ENCODE measurements at regions of chr7 and their contacts with region 1.

Region 1: GRCh38 chr7:36670585-36671431 is 53.5 kb downstream of the AOAH start:
- DNase-seq: peak; percentile 62
- ATAC-seq: peak; percentile 98
- H3K4me3 ChIP-seq: no peak overlapping the region
- H3K27ac ChIP-seq: no peak overlapping the region
- H3K4me1 ChIP-seq: no peaks in the 10 kb centered on the region
- H3K27me3 ChIP-seq: peaks cover 10% of the 10 kb centered on the region
- CTCF ChIP-seq: peak; percentile 92
- POLR2A ChIP-seq: 0 out of 2 replicates have a peak, but pooled peaks have one; percentile 33
- RAD21 ChIP-seq: peak; percentile 93

Region 2: GRCh38 chr7:36440880-36441279 is 229.9 kb before region 1 on chr7:
- CTCF ChIA-PET with region 1: interaction called, 10 read pairs
- POLR2A ChIA-PET with region 1: no interaction called
- dilution Hi-C with region 1: no loop called
- in situ Hi-C with region 1: no loop called
- intact Hi-C with region 1: loop called (anchors 2 kb)
- DNase-seq: peak; percentile 46
- ATAC-seq: peak; percentile 82
- H3K4me3 ChIP-seq: no peak overlapping the region
- H3K27ac ChIP-seq: no peak overlapping the region
- H3K4me1 ChIP-seq: peaks cover 1% of the 10 kb centered on the region; the same call in 1 of the 2 replicates
- H3K27me3 ChIP-seq: no peaks in the 10 kb centered on the region
- CTCF ChIP-seq: peak; percentile 56
- POLR2A ChIP-seq: no peak
- RAD21 ChIP-seq: peak; percentile 52

Region 3: DNA sequence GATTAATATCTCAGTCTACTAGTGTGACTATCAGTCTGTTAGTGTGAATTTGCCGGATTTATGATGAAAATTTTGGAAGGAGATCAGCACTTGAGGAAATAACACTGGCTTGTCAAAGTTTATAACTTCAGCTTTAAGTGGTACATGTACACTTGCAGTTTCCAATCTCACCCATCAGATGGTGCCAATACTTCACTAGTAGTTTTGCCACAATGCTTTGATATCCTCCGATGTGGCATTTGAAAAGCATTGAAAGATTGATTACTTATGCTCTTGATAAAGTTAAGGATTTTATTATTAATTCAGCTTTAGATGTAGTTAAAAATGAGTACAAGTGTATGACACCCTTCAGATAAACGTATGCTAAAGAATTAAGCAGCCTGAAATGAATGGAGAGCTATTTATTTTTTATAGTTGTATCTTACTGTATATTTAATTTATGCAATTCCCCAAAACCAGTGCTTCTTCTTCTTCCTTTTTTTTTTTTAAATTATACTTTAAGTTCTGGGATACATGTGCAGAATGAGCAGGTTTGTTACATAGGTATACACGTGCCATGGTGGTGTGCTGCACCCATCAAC is 183.0 kb before region 1 on chr7:
- CTCF ChIA-PET with region 1: interaction called, 55 read pairs
- POLR2A ChIA-PET with region 1: no interaction called
- dilution Hi-C with region 1: no loop called
- in situ Hi-C with region 1: loop called (anchors 5 kb)
- intact Hi-C with region 1: loop called (anchors 1 kb)
- DNase-seq: peak; percentile 68
- ATAC-seq: peak; percentile 85
- H3K4me3 ChIP-seq: no peak overlapping the region
- H3K27ac ChIP-seq: no peak overlapping the region
- H3K4me1 ChIP-seq: no peaks in the 10 kb centered on the region
- H3K27me3 ChIP-seq: peaks cover 19% of the 10 kb centered on the region
- CTCF ChIP-seq: peak; percentile 88
- POLR2A ChIP-seq: no peak
- RAD21 ChIP-seq: peak; percentile 94

Region 4: DNA sequence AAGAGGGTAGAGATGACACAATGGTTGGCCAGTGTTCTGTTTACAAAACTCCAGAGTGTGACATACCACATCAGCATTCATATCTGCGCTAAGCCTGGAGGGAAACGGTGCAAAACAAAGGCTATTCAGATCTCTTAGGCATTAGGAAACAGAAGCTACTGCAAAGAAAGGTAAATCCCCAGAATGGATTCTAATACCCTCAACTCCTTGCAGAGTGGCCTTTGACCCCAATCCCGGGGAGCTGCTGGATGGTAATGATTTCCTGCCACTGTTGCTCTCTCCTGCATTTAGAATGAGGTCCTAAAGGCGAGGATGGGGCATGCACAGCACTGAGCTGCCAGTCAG is 11.7 kb before region 1 on chr7:
- CTCF ChIA-PET with region 1: interaction called, 17 read pairs
- POLR2A ChIA-PET with region 1: no interaction called
- dilution Hi-C with region 1: no loop called
- in situ Hi-C with region 1: no loop called
- intact Hi-C with region 1: no loop called
- DNase-seq: peak; percentile 93
- ATAC-seq: peak; percentile 78
- H3K4me3 ChIP-seq: no peak overlapping the region
- H3K27ac ChIP-seq: peak overlapping the region; percentile 9; the same call in 1 of the 2 replicates
- H3K4me1 ChIP-seq: peaks cover 6% of the 10 kb centered on the region
- H3K27me3 ChIP-seq: no peaks in the 10 kb centered on the region
- CTCF ChIP-seq: no peak
- POLR2A ChIP-seq: no peak
- RAD21 ChIP-seq: no peak

Region 5: GRCh38 chr7:36749282-36749960 is 78.6 kb after region 1 on chr7:
- CTCF ChIA-PET with region 1: no interaction called
- POLR2A ChIA-PET with region 1: no interaction called
- dilution Hi-C with region 1: no loop called
- in situ Hi-C with region 1: no loop called
- intact Hi-C with region 1: no loop called
- DNase-seq: peak; percentile 10
- ATAC-seq: no peak
- H3K4me3 ChIP-seq: no peak overlapping the region
- H3K27ac ChIP-seq: no peak overlapping the region
- H3K4me1 ChIP-seq: no peaks in the 10 kb centered on the region
- H3K27me3 ChIP-seq: no peaks in the 10 kb centered on the region
- CTCF ChIP-seq: no peak
- POLR2A ChIP-seq: no peak
- RAD21 ChIP-seq: no peak

Region 6: GRCh38 chr7:37065779-37066271 is 395.0 kb after region 1 on chr7:
- CTCF ChIA-PET with region 1: no interaction called
- POLR2A ChIA-PET with region 1: no interaction called
- dilution Hi-C with region 1: no loop called
- in situ Hi-C with region 1: no loop called
- intact Hi-C with region 1: no loop called
- DNase-seq: peak; percentile 44
- ATAC-seq: peak; percentile 55
- H3K4me3 ChIP-seq: no peak overlapping the region
- H3K27ac ChIP-seq: no peak overlapping the region
- H3K4me1 ChIP-seq: no peaks in the 10 kb centered on the region
- H3K27me3 ChIP-seq: no peaks in the 10 kb centered on the region; the same call in 1 of the 2 replicates
- CTCF ChIP-seq: no peak
- POLR2A ChIP-seq: no peak
- RAD21 ChIP-seq: no peak

Measured in IMR-90 (cell line).